Heart right ventricle (tissue), 16 donors: ENCODE measurements at regions of chr12 and their contacts with region 1.

Region 1: DNA sequence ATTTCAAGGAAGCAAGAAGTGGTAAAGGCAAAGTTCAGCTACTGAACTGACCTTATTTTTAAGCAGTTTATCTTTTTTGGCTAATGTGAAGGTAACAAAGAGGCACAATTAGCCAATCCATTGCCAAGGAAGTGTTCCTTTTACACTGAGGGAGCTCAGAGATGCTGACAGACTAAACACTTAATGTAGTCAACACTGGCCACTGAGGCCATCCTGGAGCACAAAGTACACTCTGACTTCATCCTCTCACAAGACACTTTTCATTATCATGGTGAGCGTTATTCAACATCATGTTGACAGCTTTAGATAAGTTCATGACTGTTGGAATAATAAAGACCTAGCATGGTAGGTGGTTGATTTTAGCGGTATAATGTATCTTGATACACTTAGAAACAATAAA is 89.9 kb downstream of the ADAMTS20 start:
- DNase-seq: no peak
- ATAC-seq: peak in 2 of 8 donors; percentile 78 to 83
- H3K4me3 ChIP-seq: no peak overlapping the region
- H3K27ac ChIP-seq: no peak overlapping the region
- H3K4me1 ChIP-seq: no peaks in the 10 kb centered on the region
- H3K27me3 ChIP-seq: peaks cover 0 to 24% (median 0%) of the 10 kb centered on the region in 7 donors
- CTCF ChIP-seq: no peak

Region 2: DNA sequence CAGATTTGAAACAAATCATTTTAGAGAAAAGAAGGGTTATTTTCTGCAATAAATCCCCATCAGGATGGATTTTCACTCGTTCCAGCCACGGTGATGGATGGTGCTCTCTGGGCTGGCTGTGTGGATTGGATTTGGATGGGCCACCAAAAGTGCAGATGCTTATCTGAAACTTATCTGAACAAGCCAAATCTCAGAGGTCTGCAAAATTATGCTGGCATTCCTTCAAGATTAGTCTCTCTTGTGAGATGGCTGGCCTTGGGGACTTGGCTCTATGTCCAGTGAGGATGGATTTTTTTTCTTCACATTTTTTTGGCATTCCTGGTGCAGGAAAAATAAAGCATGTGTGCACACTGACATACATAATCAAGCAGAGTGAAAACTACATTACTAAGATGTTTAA is 1659.3 kb before region 1 on chr12:
- intact Hi-C with region 1: loop called in 1 of 10 experiments (anchors 10 kb)
- DNase-seq: no peak
- ATAC-seq: no peak
- H3K4me3 ChIP-seq: no peak overlapping the region
- H3K27ac ChIP-seq: no peak overlapping the region
- H3K4me1 ChIP-seq: no peaks in the 10 kb centered on the region
- H3K27me3 ChIP-seq: no peaks in the 10 kb centered on the region
- CTCF ChIP-seq: no peak

Region 3: GRCh38 chr12:43255522-43256111 is 206.5 kb before region 1 on chr12:
- intact Hi-C with region 1: no loop called
- DNase-seq: no peak
- ATAC-seq: no peak
- H3K4me3 ChIP-seq: no peak overlapping the region
- H3K27ac ChIP-seq: no peak overlapping the region
- H3K4me1 ChIP-seq: no peaks in the 10 kb centered on the region
- H3K27me3 ChIP-seq: no peaks in the 10 kb centered on the region
- CTCF ChIP-seq: no peak